ENCODE measurements at regions of chr11 and their contacts with region 1.

Region 1: GRCh38 chr11:13315517-13316432 is 38.2 kb downstream of the BMAL1 start:
- DNase-seq: no peak
- H3K4me3 ChIP-seq: no peak overlapping the region
- H3K27ac ChIP-seq: no peak overlapping the region
- H3K4me1 ChIP-seq: peaks cover 45% of the 10 kb centered on the region
- H3K27me3 ChIP-seq: no peaks in the 10 kb centered on the region
- CTCF ChIP-seq: no peak

Region 2: GRCh38 chr11:13329670-13330356 is 14.0 kb after region 1 on chr11:
- CTCF ChIA-PET with region 1: no interaction called
- dilution Hi-C with region 1: no loop called
- in situ Hi-C with region 1: no loop called
- intact Hi-C with region 1: loop called (anchors 2 kb)
- DNase-seq: peak; percentile 74
- H3K4me3 ChIP-seq: no peak overlapping the region
- H3K27ac ChIP-seq: no peak overlapping the region
- H3K4me1 ChIP-seq: peaks cover 40% of the 10 kb centered on the region
- H3K27me3 ChIP-seq: no peaks in the 10 kb centered on the region
- CTCF ChIP-seq: no peak

Region 3: DNA sequence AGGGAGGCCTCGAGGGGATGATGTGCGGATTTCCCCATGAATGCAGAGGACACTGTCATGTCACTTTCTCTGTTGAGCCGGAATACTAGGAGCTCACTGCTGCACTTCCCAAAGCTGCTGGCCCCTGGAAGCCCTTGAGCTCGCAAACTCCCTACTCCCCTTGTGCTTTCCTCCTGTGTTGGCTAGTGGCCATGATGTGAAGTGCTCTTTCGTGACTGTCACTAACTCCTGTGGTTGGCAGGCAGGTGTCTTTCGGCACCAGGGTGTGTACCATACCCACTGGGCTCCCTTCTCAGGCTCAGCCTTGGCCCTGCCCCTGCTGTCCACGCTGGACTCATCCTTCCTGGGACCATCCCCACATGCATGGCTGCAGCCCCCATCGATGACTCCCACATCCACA is 61.1 kb after region 1 on chr11:
- CTCF ChIA-PET with region 1: no interaction called
- dilution Hi-C with region 1: no loop called
- in situ Hi-C with region 1: no loop called
- intact Hi-C with region 1: no loop called
- DNase-seq: no peak
- H3K4me3 ChIP-seq: no peak overlapping the region
- H3K27ac ChIP-seq: no peak overlapping the region
- H3K4me1 ChIP-seq: no peaks in the 10 kb centered on the region
- H3K27me3 ChIP-seq: no peaks in the 10 kb centered on the region
- CTCF ChIP-seq: no peak

Measured in mammary epithelial cell (primary cell).